ENCODE measurements at regions of chr1 and their contacts with region 1.

Region 1: GRCh38 chr1:44792783-44793714 is 5.1 kb upstream of the BEST4 start:
- DNase-seq: no peak
- H3K4me3 ChIP-seq: no peak overlapping the region
- H3K27ac ChIP-seq: no peak overlapping the region
- H3K4me1 ChIP-seq: no peaks in the 10 kb centered on the region
- H3K27me3 ChIP-seq: no peaks in the 10 kb centered on the region
- CTCF ChIP-seq: no peak
- POLR2A ChIP-seq: no peak

Region 2: GRCh38 chr1:44807262-44808062 is 14.4 kb after region 1 on chr1 and contains the start of gene DYNLT4:
- CTCF ChIA-PET with region 1: interaction called, 11 read pairs
- POLR2A ChIA-PET with region 1: interaction called, 8 read pairs
- dilution Hi-C with region 1: no loop called
- intact Hi-C with region 1: no loop called
- DNase-seq: peak; percentile 100
- H3K4me3 ChIP-seq: peak within 1 kb of the TSS in 2 of 3 experiments; percentile 6 to 25
- H3K27ac ChIP-seq: peak within 1 kb of the TSS; percentile 100
- H3K4me1 ChIP-seq: peaks cover 72% of the 10 kb centered on the region
- H3K27me3 ChIP-seq: no peaks in the 10 kb centered on the region
- CTCF ChIP-seq: no peak
- POLR2A ChIP-seq: peak; percentile 75
- total RNA-seq, gene DYNLT4: 0.62 and 1.1 TPM in 2 replicates

Region 3: DNA sequence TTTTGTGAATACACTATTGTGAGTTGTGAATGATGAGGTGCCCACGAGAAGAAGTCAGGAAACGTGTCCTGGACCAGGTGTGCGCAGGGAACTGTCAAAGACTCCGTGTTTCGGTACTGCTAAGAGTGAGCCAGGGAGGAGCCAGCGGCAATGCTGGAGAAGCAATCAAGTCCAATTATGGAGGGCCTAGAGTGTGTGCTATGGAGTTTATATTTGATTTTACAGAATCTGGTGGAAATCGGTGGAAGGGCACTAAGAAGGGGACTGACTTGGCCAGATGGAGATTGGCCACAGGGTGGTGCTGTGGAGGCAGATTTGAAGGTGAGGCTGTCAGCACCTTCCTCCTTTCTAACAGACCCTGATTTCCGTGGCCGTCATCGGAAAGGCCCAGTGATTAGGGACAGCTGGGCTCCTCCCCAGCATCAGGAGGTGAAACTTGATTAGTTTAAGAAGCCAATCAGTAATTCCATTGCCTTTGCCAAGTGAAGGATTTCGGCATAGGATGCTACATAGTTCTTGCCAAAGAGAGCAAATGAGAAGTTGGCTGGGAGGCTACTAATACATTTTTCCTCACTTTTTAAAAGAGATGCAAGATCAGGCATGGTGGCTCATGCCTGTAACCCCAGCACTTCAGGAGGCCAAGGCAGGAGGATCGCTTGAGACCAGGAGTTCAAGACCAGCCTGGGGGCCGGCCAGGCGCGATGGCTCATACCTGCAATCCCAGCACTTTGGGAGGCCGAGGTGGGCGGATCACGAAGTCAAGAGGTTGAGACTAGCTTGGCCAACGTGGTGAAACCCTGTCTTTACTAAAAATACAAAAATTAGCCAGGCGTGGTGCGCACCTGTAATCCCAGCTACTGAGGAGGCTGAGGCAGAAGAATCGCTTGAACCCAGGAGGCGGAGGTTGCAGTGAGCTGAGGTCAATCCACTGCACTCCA is 43.0 kb after region 1 on chr1:
- CTCF ChIA-PET with region 1: interaction called, 7 read pairs
- POLR2A ChIA-PET with region 1: no interaction called
- dilution Hi-C with region 1: no loop called
- intact Hi-C with region 1: loop called (anchors 2 kb)
- DNase-seq: peak; percentile 88
- H3K4me3 ChIP-seq: no peak overlapping the region
- H3K27ac ChIP-seq: no peak overlapping the region
- H3K4me1 ChIP-seq: no peaks in the 10 kb centered on the region
- H3K27me3 ChIP-seq: no peaks in the 10 kb centered on the region
- CTCF ChIP-seq: peak; percentile 85 to 93
- POLR2A ChIP-seq: no peak